ENCODE measurements at regions of chr12 and their contacts with region 1.

Region 1: GRCh38 chr12:131928711-131929580 is at the start of gene PUS1:
- DNase-seq: peak; percentile 94
- ATAC-seq: peak; percentile 93
- H3K4me3 Mint-ChIP-seq: peak within 1 kb of the TSS; percentile 94
- H3K27ac Mint-ChIP-seq: peak within 1 kb of the TSS; percentile 93
- H3K4me1 Mint-ChIP-seq: peaks cover 20% of the 10 kb centered on the region
- H3K27me3 Mint-ChIP-seq: no peaks in the 10 kb centered on the region
- CTCF ChIP-seq: no peak
- total RNA-seq, gene PUS1: 68.2 to 71.7 TPM

Region 2: DNA sequence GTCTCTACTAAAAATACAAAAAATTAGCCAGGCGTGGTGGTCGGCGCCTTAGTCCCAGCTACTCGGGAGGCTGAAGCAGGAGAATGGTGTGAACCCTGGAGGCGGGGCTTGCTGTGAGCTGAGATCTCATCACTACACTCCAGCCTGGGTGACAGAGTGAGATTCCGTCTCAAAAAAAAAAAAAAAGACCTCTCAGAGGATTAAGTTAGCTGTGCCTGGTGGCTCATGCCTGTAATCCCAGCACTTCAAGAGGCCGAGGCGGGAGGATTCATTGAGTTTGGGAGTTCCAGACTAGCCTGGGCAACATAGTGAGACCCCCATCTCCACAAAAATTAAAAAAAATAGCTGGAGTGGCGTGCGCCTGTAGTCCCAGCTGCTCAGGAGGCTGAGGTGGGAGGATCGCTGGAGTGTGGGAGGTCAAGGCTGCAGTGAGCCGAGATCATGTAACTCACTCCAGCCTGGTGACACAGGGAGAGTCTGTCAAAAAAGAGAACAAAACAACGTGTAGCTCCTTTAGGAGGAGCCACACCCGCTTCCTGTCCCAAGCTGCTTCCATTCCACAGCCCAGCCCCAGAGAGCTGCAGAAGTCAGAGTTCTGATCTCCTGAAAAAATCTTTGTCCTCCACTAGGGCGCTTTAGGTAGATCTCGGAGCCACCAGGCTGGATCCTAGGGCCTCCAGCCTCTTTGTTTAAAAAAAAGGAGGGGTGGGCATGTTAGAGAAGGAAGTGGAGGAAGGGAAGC is 46.0 kb before region 1 on chr12:
- CTCF ChIA-PET with region 1: no interaction called
- POLR2A ChIA-PET with region 1: no interaction called
- intact Hi-C with region 1: no loop called
- DNase-seq: no peak
- ATAC-seq: no peak
- H3K4me3 Mint-ChIP-seq: no peak overlapping the region
- H3K27ac Mint-ChIP-seq: no peak overlapping the region
- H3K4me1 Mint-ChIP-seq: no peaks in the 10 kb centered on the region
- H3K27me3 Mint-ChIP-seq: no peaks in the 10 kb centered on the region
- CTCF ChIP-seq: no peak

Region 3: GRCh38 chr12:131939007-131939406 is 10.1 kb after region 1 on chr12:
- CTCF ChIA-PET with region 1: no interaction called
- POLR2A ChIA-PET with region 1: interaction called, 11 read pairs
- intact Hi-C with region 1: no loop called
- DNase-seq: no peak
- ATAC-seq: no peak
- H3K4me3 Mint-ChIP-seq: no peak overlapping the region
- H3K27ac Mint-ChIP-seq: no peak overlapping the region
- H3K4me1 Mint-ChIP-seq: no peaks in the 10 kb centered on the region
- H3K27me3 Mint-ChIP-seq: no peaks in the 10 kb centered on the region
- CTCF ChIP-seq: no peak

Region 4: DNA sequence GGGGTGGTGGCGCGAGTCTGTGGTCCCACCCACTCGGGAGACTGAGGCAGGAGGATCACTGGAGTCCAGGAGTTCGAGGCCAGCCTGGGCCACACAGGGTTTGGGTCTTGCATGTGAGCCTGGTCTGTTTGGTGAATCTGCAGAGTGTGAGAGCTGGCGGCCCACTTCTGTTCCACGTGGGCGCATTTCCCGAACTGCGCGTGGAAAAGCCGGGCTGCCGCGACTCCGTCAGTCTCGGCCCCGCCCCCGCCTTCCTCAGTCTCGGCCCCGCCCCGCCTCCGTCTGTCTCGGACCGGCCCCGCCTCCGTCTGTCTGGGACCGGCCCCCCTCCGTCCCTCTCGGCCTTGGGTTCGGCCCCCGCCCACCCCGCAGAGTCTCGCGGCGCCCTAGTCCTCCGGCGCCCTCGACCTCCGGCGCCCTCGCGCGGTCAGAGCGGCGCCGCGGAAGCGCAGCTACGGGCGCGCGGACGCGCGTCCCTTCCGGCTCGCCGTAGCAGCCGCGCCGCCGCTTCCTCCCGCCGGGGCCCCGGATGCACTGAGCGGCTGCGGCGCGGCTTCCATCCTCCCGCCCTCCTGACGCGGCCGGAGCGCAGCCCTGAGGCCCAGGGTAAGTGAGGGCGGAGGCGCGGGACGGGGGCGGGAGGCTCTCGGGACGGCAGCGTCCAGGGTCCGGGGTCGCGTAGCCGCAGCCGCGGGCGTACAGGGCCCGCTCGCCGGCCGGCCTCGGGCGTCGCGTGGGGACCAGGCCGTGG is 20.7 kb after region 1 on chr12 and contains the start of gene EP400:
- CTCF ChIA-PET with region 1: interaction called, 5 read pairs
- POLR2A ChIA-PET with region 1: interaction called, 10 read pairs
- intact Hi-C with region 1: no loop called
- DNase-seq: peak; percentile 97
- ATAC-seq: peak; percentile 98
- H3K4me3 Mint-ChIP-seq: peak within 1 kb of the TSS; percentile 86
- H3K27ac Mint-ChIP-seq: peak within 1 kb of the TSS; percentile 91
- H3K4me1 Mint-ChIP-seq: peaks cover 37% of the 10 kb centered on the region
- H3K27me3 Mint-ChIP-seq: no peaks in the 10 kb centered on the region
- CTCF ChIP-seq: peak; percentile 36
- total RNA-seq, gene EP400: 45.6 to 46.1 TPM

Measured in activated CD8-positive, alpha-beta T cell treated with anti-CD3 and anti-CD28 coated beads for 36 hours (primary cell).